Activated CD8-positive, alpha-beta T cell treated with anti-CD3 and anti-CD28 coated beads for 36 hours (primary cell): ENCODE measurements at regions of chr20 and their contacts with region 1.

Region 1: DNA sequence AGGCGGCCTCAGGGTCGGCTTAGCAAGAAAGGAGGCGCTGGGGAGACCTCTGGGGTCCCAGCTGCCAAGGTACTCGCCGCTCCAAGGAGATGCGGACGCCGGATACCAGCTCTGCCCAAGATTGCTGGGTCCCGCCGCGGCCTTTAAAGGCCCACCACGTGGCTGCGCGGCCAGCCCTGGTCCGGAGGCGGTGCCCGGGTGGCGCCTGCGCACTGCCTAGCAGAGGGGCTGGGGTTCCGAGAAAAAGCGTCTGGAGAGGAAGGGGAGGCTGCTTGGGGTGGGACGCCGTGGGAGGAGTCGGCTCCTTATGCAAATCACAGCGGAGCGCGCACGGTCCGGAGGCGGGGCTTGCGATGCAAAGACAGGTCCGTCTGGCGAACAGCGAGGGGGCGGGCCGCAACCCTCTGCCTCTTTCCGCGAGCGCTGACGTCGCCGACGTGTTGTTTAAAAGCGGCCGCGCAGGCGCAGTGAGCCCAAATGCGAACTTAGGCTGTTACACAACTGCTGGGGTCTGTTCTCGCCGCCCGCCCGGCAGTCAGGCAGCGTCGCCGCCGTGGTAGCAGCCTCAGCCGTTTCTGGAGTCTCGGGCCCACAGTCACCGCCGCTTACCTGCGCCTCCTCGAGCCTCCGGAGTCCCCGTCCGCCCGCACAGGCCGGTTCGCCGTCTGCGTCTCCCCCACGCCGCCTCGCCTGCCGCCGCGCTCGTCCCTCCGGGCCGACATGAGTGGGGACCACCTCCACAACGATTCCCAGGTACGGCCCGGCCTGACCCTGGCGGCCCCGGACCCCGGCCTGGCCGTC is at the start of gene TOP1:
- DNase-seq: peak; percentile 100
- ATAC-seq: peak; percentile 98
- H3K4me3 Mint-ChIP-seq: peak within 1 kb of the TSS; percentile 88
- H3K27ac Mint-ChIP-seq: peak within 1 kb of the TSS; percentile 92
- H3K4me1 Mint-ChIP-seq: peaks cover 42% of the 10 kb centered on the region
- H3K27me3 Mint-ChIP-seq: no peaks in the 10 kb centered on the region
- CTCF ChIP-seq: no peak
- total RNA-seq, gene TOP1: 81.0 to 81.1 TPM

Region 2: GRCh38 chr20:40945754-40946450 is 82.6 kb before region 1 on chr20:
- CTCF ChIA-PET with region 1: no interaction called
- POLR2A ChIA-PET with region 1: no interaction called
- intact Hi-C with region 1: no loop called
- DNase-seq: peak; percentile 28
- ATAC-seq: no peak
- H3K4me3 Mint-ChIP-seq: no peak overlapping the region
- H3K27ac Mint-ChIP-seq: no peak overlapping the region
- H3K4me1 Mint-ChIP-seq: no peaks in the 10 kb centered on the region
- H3K27me3 Mint-ChIP-seq: no peaks in the 10 kb centered on the region
- CTCF ChIP-seq: no peak

Region 3: GRCh38 chr20:41038878-41039404 is 10.4 kb after region 1 on chr20:
- CTCF ChIA-PET with region 1: interaction called, 25 read pairs
- POLR2A ChIA-PET with region 1: interaction called, 23 read pairs
- intact Hi-C with region 1: no loop called
- DNase-seq: no peak
- ATAC-seq: peak; percentile 80
- H3K4me3 Mint-ChIP-seq: no peak overlapping the region
- H3K27ac Mint-ChIP-seq: peak overlapping the region; percentile 74
- H3K4me1 Mint-ChIP-seq: peaks cover 83% of the 10 kb centered on the region
- H3K27me3 Mint-ChIP-seq: no peaks in the 10 kb centered on the region
- CTCF ChIP-seq: no peak

Region 4: DNA sequence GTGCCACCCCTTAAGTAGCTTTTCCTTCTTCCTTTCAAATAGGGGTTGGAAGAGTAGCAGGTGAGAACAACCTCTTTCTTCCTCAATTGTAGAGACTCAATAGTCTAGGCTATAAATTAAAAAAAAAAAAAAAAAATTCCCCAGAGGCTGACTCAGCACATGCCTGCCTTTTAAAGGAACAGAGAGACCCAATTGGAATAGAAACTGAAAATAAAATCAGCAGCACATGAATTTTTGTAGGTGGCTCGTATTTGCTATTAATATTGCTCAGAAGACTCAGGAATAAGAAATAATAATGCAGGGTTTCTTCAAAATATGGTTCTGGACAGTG is 19.4 kb after region 1 on chr20:
- CTCF ChIA-PET with region 1: interaction called, 25 read pairs
- POLR2A ChIA-PET with region 1: interaction called, 12 read pairs
- intact Hi-C with region 1: no loop called
- DNase-seq: no peak
- ATAC-seq: peak; percentile 52
- H3K4me3 Mint-ChIP-seq: peak overlapping the region; percentile 79
- H3K27ac Mint-ChIP-seq: peak overlapping the region; percentile 87
- H3K4me1 Mint-ChIP-seq: peaks cover 86% of the 10 kb centered on the region
- H3K27me3 Mint-ChIP-seq: no peaks in the 10 kb centered on the region
- CTCF ChIP-seq: no peak

Region 5: GRCh38 chr20:41081276-41081814 is 52.8 kb after region 1 on chr20:
- CTCF ChIA-PET with region 1: no interaction called
- POLR2A ChIA-PET with region 1: no interaction called
- intact Hi-C with region 1: no loop called
- DNase-seq: no peak
- ATAC-seq: no peak
- H3K4me3 Mint-ChIP-seq: no peak overlapping the region
- H3K27ac Mint-ChIP-seq: peak overlapping the region; percentile 61
- H3K4me1 Mint-ChIP-seq: peaks cover 32% of the 10 kb centered on the region
- H3K27me3 Mint-ChIP-seq: no peaks in the 10 kb centered on the region
- CTCF ChIP-seq: no peak

Region 6: DNA sequence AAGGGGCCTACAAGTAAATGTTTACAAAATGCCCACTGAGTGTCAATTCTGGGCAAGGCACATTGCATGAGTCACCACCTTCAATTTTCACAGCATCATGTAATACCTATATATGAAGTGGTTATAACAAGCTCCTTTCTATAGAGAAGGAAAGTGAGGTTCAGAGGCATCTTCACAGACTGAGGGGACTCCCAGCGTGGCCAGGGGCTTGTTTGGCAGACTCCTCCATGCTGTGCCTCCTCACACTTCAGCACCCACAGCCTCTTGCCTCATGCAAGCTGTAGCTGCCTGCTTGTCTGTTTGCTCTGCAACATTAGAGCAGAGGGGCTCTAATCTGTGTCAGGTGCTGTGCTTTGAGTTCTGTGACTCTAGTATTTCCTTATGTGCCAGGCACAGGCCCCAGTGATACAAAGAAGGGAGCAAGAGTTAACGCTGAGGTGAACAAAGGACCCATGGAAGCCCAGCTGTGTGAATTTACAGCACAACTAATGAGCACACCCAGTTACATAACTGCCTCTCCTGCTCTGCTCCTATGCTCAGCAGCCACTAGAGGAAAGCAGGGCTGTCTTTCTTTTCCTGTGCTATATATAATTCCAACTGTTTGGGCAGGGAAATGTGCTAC is 216.6 kb after region 1 on chr20:
- CTCF ChIA-PET with region 1: no interaction called
- POLR2A ChIA-PET with region 1: no interaction called
- intact Hi-C with region 1: no loop called
- DNase-seq: peak; percentile 43
- ATAC-seq: peak; percentile 58
- H3K4me3 Mint-ChIP-seq: no peak overlapping the region
- H3K27ac Mint-ChIP-seq: no peak overlapping the region
- H3K4me1 Mint-ChIP-seq: peaks cover 28% of the 10 kb centered on the region
- H3K27me3 Mint-ChIP-seq: no peaks in the 10 kb centered on the region
- CTCF ChIP-seq: no peak